GM10248 (cell line): ENCODE measurements at regions of chr6 and their contacts with region 1.

Region 1: GRCh38 chr6:31575335-31575901 is at the start of gene TNF:
- DNase-seq: peak; percentile 81
- CTCF ChIP-seq: no peak

Region 2: DNA sequence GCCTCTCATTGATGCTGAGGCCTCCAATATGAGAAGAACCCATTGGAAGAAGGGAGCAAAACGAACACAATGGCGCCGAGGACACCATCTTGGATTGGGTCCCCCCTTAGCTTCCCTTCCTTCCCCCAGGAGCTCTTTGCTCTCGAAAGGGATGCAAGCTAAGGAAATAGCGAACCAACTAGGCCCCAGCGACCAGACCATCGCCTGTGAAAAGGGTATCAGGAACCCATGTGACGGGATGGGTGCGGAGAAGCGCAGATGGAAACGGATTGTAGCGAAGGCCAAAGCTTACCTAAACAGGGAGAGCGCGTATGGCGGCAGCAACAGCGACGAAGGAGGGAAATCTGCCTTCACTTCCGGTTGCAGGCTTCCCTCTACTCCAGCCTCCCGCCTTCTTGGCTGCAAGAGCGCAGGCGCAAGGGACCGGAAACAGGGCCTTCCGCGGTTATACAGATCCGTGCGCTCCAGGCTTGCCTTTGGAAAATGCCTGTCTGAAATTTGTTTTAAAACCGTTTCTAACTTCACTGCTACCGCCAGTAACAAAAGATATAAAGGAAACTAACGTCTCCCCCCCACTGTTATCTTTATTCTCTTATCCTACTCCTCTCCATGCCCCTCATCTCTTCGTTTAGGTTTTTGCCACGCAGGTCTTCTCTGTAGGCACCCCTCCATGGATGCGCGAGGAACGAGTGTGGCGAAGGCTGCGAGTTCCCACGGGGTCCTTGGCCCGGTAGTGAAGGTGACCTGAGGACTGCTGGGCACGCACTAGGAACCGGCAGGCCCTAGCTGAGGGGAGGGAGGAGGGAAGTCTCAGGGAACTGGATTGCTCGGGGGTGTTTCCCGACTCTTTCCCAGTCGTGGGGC is 33.5 kb before region 1 on chr6 and contains the start of gene DDX39B:
- CTCF ChIA-PET with region 1: interaction called, 2,725 read pairs
- POLR2A ChIA-PET with region 1: interaction called, 86 read pairs
- DNase-seq: peak; percentile 92
- CTCF ChIP-seq: no peak

Region 3: DNA sequence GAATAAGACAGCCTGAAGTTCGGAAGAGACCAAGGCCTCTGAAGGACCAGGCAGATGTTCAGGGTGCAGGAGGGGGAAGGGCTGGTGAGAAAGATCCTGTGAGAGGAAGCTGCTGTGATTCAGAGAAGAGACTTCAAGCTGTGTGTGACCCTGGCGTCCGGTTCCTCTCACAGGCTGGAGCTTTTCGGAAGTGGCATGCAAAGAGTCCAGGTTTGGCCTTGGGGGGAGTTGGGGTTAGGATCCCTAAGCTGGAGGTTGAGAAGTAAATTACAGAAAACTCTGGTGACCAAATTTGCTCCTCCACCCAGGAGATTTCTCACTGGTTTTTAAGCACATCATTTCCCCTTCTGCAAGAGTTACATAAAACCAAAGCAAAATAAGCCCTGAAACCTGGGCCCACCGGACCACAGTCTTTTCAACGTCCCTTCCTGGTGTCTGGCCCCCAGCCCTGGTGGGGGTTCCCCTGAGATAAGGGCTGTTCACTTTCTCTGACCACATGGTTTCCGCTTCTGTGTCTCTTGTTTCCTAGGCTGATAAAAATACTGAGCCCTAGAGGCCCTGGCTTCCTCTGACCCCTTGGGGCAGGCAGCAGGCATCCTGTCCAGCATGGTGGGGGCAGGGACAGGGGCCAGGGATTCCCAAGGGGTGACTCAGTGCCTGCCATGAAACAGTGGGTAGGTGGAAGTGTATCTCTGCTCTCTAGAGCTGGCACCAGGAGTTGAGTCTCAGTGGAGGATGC is 15.3 kb before region 1 on chr6:
- CTCF ChIA-PET with region 1: interaction called, 2,725 read pairs
- POLR2A ChIA-PET with region 1: interaction called, 94 read pairs
- DNase-seq: peak; percentile 74
- CTCF ChIP-seq: no peak